WTC11 (cell line): ENCODE measurements at regions of chr3 and their contacts with region 1.

Region 1: DNA sequence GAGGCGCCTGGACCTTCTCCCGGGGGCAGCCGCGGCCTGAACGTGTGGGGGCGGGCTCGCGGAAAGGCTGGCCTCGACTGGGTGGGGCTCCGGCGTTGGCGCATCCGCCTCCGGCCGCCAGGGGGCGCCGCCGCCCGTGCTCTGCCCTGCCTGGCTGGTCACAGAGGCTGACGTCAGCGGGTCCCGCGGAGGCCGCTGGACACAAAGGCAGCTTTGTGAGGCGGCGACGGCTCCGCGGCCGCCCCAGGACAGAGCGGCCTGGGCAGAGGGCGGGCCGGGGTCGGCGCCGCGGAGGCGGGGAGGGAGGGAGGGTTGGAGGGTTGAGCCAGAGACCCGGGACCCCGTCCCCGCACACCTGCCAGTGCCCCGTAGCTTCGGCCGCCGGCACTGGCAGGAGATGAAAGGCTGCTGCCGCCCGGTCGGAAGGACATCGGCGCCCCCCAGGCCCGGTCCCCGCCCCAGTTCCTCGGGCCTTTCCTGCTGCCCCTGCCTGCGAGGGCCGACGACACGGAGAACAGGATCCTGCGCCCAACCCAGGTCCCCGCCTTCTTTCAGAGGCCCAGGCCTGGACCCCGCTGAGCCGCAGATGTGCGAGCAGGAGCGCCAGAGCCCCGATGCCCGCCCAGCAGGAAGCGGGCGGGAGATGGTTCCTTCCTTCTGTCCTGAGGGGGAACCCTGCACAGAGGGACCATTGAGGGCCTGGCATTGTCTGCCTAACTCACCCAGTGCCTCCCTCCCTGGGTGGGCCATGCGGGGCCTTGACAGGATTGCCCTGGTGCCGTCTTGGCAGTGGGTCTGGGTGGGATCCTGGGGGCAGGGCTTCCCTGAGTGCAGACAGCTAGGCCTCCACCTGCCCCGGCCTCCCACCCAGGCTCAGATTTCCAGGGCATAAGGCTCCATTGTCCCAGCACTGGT is 8.7 kb upstream of the SEMA3B start:
- DNase-seq: peak; percentile 94
- ATAC-seq: peak; percentile 42
- H3K4me3 Mint-ChIP-seq: peak overlapping the region; percentile 64
- H3K27ac Mint-ChIP-seq: no peak overlapping the region
- H3K4me1 Mint-ChIP-seq: peaks cover 31% of the 10 kb centered on the region
- H3K27me3 Mint-ChIP-seq: no peaks in the 10 kb centered on the region
- CTCF ChIP-seq: peak; percentile 98

Region 2: GRCh38 chr3:50100956-50101845 is 159.1 kb before region 1 on chr3:
- CTCF ChIA-PET with region 1: no interaction called
- POLR2A ChIA-PET with region 1: no interaction called
- DNase-seq: no peak
- ATAC-seq: no peak
- H3K4me3 Mint-ChIP-seq: no peak overlapping the region
- H3K27ac Mint-ChIP-seq: no peak overlapping the region; the same call in 1 of the 2 replicates
- H3K4me1 Mint-ChIP-seq: no peaks in the 10 kb centered on the region
- H3K27me3 Mint-ChIP-seq: no peaks in the 10 kb centered on the region
- CTCF ChIP-seq: no peak

Region 3: GRCh38 chr3:50211930-50212329 is 48.4 kb before region 1 on chr3:
- CTCF ChIA-PET with region 1: interaction called, 10 read pairs
- POLR2A ChIA-PET with region 1: no interaction called
- DNase-seq: no peak
- ATAC-seq: no peak
- H3K4me3 Mint-ChIP-seq: no peak overlapping the region
- H3K27ac Mint-ChIP-seq: no peak overlapping the region
- H3K4me1 Mint-ChIP-seq: peaks cover 6% of the 10 kb centered on the region; the same call in 1 of the 2 replicates
- H3K27me3 Mint-ChIP-seq: peaks cover 9% of the 10 kb centered on the region
- CTCF ChIP-seq: no peak

Region 4: DNA sequence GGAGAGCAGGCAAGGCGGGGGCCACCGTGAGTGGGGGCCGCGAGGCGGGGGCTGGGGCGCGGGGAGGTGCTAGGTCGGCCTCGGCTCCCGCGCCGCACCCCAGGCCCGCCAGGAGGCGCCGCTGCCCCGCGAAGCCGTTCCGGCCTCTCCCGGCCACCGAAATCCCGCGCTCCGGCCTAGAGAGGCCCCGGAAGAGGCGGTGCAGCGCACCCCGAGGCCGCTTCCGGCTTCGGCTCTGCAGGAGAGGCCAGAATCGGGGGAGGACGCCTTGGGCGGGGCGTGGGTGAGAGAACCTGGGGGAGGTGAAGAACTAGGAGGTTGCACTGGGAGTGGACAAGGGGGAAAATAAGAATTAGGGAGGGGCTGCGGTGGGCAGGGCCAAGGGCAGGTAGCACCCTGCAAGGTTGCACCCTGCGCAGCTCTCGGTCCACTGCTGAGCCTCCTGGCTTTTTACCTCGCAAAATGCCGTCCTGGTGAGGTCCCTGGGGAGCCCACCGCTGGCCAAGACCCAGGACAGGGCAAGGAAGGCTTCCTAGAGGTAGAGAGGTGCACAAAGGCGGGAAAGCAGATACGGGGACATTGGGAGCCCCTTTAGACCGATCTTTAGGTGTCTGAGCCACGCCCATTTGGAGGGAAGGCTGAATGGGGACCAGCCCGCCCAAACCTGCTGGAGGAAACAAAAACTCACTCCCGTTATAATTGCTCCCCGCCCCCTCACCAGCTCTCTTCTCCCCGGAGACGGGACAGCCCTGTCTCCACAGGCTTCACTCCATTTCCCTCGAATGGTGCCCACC is 32.7 kb before region 1 on chr3:
- CTCF ChIA-PET with region 1: interaction called, 82 read pairs
- POLR2A ChIA-PET with region 1: interaction called, 13 read pairs
- DNase-seq: peak; percentile 92
- ATAC-seq: peak; percentile 75
- H3K4me3 Mint-ChIP-seq: peak overlapping the region; percentile 96
- H3K27ac Mint-ChIP-seq: peak overlapping the region; percentile 89
- H3K4me1 Mint-ChIP-seq: peaks cover 24% of the 10 kb centered on the region
- H3K27me3 Mint-ChIP-seq: peaks cover 4% of the 10 kb centered on the region
- CTCF ChIP-seq: peak; percentile 61

Region 5: GRCh38 chr3:50245831-50246516 is 14.3 kb before region 1 on chr3:
- CTCF ChIA-PET with region 1: interaction called, 151 read pairs
- POLR2A ChIA-PET with region 1: interaction called, 10 read pairs
- DNase-seq: peak; percentile 98
- ATAC-seq: peak; percentile 73
- H3K4me3 Mint-ChIP-seq: peak overlapping the region; percentile 40
- H3K27ac Mint-ChIP-seq: peak overlapping the region; percentile 91
- H3K4me1 Mint-ChIP-seq: peaks cover 59% of the 10 kb centered on the region
- H3K27me3 Mint-ChIP-seq: no peaks in the 10 kb centered on the region
- CTCF ChIP-seq: peak; percentile 99

Region 6: GRCh38 chr3:50278868-50279224 is 18.6 kb after region 1 on chr3 and contains the start of gene LSMEM2:
- CTCF ChIA-PET with region 1: interaction called, 88 read pairs
- POLR2A ChIA-PET with region 1: interaction called, 5 read pairs
- DNase-seq: no peak
- ATAC-seq: no peak
- H3K4me3 Mint-ChIP-seq: no peak within 1 kb of the TSS
- H3K27ac Mint-ChIP-seq: no peak within 1 kb of the TSS
- H3K4me1 Mint-ChIP-seq: peaks cover 17% of the 10 kb centered on the region
- H3K27me3 Mint-ChIP-seq: peaks cover 54% of the 10 kb centered on the region
- CTCF ChIP-seq: no peak
- total RNA-seq, gene LSMEM2: 0.41 to 0.60 TPM (median 0.57 TPM) in 3 replicates

Region 7: GRCh38 chr3:50321336-50322114 is 61.2 kb after region 1 on chr3:
- CTCF ChIA-PET with region 1: interaction called, 13 read pairs
- POLR2A ChIA-PET with region 1: no interaction called
- DNase-seq: peak; percentile 90
- ATAC-seq: peak; percentile 71
- H3K4me3 Mint-ChIP-seq: peak overlapping the region; percentile 88
- H3K27ac Mint-ChIP-seq: peak overlapping the region; percentile 97
- H3K4me1 Mint-ChIP-seq: peaks cover 40% of the 10 kb centered on the region
- H3K27me3 Mint-ChIP-seq: no peaks in the 10 kb centered on the region
- CTCF ChIP-seq: peak; percentile 56; the same call in 1 of the 2 replicates